ENCODE measurements at regions of chr15 and their contacts with region 1.

Region 1: DNA sequence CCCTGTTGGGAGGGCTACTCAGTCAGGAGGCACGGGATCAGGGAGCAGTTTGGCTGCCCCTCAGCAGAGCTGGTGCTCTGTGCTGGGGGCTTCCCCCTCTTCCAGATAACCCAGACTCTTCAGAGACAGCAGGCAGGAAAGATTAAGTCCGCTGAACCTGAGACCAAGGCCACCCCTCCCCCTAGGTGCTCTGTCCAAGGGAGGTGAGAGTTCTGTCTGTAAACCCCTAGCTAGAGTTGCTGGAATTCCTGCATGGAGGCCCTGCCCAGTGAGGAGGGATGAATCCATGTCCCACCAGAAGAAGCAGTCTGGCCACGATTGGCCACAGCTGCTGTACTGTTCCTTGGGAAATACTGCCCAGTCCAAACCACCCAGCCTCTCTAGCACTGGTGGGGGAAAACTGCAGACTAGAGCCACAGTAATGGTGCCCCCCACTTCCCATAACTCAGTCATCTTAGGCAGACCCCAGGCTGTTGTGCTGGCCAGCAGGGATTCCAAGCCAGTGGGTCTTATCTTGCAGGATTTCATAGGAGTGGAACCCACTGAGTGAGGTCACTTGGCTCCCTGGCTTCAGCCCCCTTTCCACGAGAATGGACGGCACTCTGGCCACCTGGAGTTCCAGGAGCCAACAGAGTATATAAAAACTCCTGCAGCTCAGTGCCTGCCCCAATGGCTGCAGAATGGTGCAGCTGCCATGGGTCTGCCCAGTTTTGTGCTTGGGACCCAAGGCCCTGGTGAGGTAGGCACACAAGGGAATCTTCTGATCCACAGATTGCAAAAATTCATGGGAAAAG is 42.9 kb downstream of the NPAP1 start:
- DNase-seq: no peak
- H3K4me3 ChIP-seq: no peak overlapping the region
- H3K27ac ChIP-seq: no peak overlapping the region
- H3K4me1 ChIP-seq: no peaks in the 10 kb centered on the region
- CTCF ChIP-seq: no peak

Region 2: DNA sequence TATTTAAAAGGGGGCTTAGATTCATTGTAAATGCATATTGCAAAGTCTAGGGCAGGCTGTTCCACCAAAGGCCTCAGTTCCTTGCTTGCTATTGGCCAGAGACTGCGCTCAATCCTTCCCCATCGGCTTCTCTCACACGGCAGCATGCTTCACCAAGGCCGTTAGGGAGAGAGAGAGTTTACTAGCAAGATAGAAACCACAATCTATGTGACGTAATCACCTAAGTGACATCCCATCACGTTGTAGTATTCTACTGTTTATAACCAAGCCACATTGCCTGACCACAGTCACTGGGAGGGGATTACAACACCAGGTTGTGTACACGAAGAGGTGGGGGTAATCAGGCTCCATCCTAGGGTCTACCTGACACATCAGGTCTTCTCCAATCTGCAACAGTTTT is 58.9 kb before region 1 on chr15:
- CTCF ChIA-PET with region 1: no interaction called
- POLR2A ChIA-PET with region 1: no interaction called
- intact Hi-C with region 1: no loop called
- DNase-seq: no peak
- H3K4me3 ChIP-seq: no peak overlapping the region
- H3K27ac ChIP-seq: no peak overlapping the region
- H3K4me1 ChIP-seq: no peaks in the 10 kb centered on the region
- CTCF ChIP-seq: no peak

Region 3: DNA sequence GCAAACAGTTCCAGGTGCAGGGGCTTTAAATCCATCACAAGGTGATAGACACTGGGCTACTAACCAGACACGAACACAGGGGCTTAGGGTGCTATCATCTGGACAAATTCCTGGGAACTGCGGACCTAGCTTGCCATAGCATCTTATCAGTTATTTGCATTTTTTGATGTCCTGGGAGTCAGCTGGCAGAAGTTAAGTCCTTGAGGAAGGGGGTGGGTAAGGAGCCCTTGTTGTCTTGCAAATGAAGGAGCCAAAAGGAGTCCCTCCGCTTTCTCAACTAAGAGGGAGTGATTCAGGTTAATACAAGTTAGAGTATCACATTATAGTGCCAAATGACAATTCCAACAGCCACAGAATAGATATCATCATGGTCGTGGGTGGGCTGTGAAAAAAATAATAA is 66.0 kb after region 1 on chr15:
- CTCF ChIA-PET with region 1: no interaction called
- POLR2A ChIA-PET with region 1: no interaction called
- intact Hi-C with region 1: no loop called
- DNase-seq: no peak
- H3K4me3 ChIP-seq: no peak overlapping the region
- H3K27ac ChIP-seq: no peak overlapping the region
- H3K4me1 ChIP-seq: no peaks in the 10 kb centered on the region
- CTCF ChIP-seq: no peak

Region 4: DNA sequence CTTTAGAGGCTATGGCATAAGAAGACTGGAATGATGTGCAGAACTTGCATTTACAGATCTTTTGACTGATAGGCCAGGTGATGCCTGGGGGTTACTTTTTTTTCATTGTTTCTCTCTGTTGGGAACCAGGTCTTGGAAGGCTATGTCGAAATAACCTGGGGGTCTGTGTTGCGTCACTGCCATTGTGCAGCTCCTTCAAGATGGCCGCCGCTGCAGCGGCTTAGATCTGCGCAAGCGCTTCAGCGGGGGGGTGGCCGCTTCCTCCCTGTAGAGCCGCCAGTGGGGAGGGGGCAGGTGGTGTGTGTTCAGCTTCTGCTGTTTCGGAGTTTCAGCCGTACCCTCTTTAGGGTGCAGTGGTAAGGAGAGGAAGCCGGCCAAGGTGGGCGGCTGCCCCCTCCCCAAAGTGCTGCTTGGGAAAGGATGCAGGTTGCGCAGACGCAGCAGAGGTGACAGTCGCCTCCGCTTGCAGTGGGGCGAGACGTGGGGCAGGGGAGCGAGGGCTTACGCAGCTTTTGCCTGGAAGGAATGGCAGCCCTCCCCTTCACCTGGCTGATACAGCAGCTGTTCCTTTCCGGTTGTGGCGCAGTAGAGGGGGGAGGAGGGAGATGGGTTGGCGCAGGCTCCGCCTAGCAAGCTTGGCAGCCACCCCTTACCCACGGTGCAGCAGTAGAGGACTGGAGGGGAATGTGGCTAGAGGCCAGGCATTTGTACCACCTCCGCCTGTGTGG is 237.8 kb after region 1 on chr15:
- CTCF ChIA-PET with region 1: no interaction called
- POLR2A ChIA-PET with region 1: no interaction called
- intact Hi-C with region 1: no loop called
- DNase-seq: no peak
- H3K4me3 ChIP-seq: no peak overlapping the region
- H3K27ac ChIP-seq: no peak overlapping the region
- H3K4me1 ChIP-seq: no peaks in the 10 kb centered on the region
- CTCF ChIP-seq: no peak

Region 5: GRCh38 chr15:25169318-25169717 is 450.8 kb after region 1 on chr15:
- CTCF ChIA-PET with region 1: no interaction called
- POLR2A ChIA-PET with region 1: no interaction called
- intact Hi-C with region 1: loop called (anchors 5 kb)
- DNase-seq: no peak
- H3K4me3 ChIP-seq: no peak overlapping the region
- H3K27ac ChIP-seq: no peak overlapping the region
- H3K4me1 ChIP-seq: no peaks in the 10 kb centered on the region
- CTCF ChIP-seq: no peak

Measured in OCI-LY7 (cell line).